ENCODE measurements at regions of chr15 and their contacts with region 1.

Region 1: GRCh38 chr15:90126457-90127435 is 24.5 kb upstream of the IDH2 start:
- DNase-seq: peak; percentile 87
- ATAC-seq: peak; percentile 93

Region 2: GRCh38 chr15:90101969-90102890 is 24.5 kb before region 1 on chr15 and contains the start of gene IDH2:
- intact Hi-C with region 1: loop called (anchors 1 kb)
- DNase-seq: peak; percentile 91
- ATAC-seq: peak; percentile 84
- total RNA-seq, gene IDH2: 1,173 TPM

Measured in Right ventricle myocardium inferior (tissue), 1 donor.